Endothelial cell of umbilical vein (primary cell): ENCODE measurements at regions of chr1 and their contacts with region 1.

Region 1: DNA sequence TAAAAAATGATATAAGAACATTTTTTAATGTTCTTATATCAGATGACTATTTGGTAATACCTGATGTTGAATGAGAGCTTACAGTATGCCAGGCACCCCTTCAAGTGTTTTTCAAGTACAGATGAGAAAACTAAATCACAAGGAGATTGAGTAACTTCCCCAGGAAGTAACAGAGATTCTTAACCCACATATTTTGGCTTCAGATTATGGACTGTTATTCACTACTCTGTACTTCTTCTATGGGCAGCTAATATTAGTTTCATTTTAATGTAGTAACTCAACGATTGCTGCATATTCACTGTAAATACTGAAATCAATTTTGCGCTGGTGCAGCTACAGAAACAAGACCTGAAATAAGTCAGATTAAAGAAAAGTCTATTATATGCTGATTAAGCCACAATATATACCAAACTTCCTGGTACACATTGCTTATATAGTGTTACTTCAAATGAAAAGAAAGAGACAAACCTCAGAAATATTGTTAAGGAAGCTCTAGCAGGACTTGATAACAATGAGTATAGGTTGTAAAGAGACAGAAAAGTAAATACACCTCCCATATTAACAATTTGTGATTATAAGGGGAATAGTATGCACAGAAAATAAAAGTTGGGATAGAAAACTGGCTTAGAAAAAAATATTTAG is 19.7 kb downstream of the DPYD start:
- DNase-seq: peak; percentile 86
- H3K4me3 ChIP-seq: peak overlapping the region; percentile 21 to 88 (median 74)
- H3K27ac ChIP-seq: peak overlapping the region; percentile 92
- H3K4me1 ChIP-seq: peaks cover 44% of the 10 kb centered on the region
- H3K27me3 ChIP-seq: no peaks in the 10 kb centered on the region
- CTCF ChIP-seq: no peak
- POLR2A ChIP-seq: no peak

Region 2: DNA sequence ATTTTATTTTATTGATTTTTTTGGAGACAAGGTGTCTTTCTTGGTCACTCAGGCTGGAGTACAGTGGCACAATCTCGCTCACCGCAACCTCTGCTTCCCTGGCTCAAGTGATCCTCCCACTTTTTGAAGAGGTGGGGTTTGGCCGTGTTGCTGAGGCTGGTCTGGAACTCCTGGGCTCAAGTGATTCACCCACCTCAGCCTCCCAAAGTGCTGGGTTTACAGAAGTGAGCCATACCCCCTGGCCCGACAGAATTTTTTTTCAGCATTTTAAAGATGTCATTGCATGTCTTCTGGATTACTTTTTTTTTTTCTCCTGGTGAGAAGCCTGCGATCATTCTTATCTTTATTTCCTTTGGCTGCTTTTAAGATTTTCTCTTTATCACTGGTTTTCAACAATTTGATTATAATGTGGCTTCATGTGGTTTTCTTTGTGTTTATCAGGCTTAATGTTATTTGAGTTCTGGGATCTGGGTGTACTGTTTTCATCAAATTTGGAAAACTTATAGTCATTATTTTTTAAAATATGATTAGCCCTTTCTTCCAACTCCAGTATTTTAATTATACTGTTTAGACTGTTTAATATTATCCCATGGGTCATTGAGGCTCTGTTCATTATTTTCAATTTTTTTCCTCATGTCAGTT is 1202.7 kb before region 1 on chr1:
- CTCF ChIA-PET with region 1: no interaction called
- POLR2A ChIA-PET with region 1: no interaction called
- dilution Hi-C with region 1: no loop called
- intact Hi-C with region 1: no loop called
- DNase-seq: no peak
- H3K4me3 ChIP-seq: no peak overlapping the region
- H3K27ac ChIP-seq: no peak overlapping the region
- H3K4me1 ChIP-seq: no peaks in the 10 kb centered on the region
- H3K27me3 ChIP-seq: no peaks in the 10 kb centered on the region
- CTCF ChIP-seq: no peak
- POLR2A ChIP-seq: no peak

Region 3: GRCh38 chr1:97796711-97797110 is 104.4 kb before region 1 on chr1:
- CTCF ChIA-PET with region 1: no interaction called
- POLR2A ChIA-PET with region 1: no interaction called
- dilution Hi-C with region 1: no loop called
- intact Hi-C with region 1: loop called (anchors 1 kb)
- DNase-seq: peak; percentile 89
- H3K4me3 ChIP-seq: no peak overlapping the region
- H3K27ac ChIP-seq: peak overlapping the region; percentile 84
- H3K4me1 ChIP-seq: peaks cover 29% of the 10 kb centered on the region
- H3K27me3 ChIP-seq: no peaks in the 10 kb centered on the region
- CTCF ChIP-seq: no peak
- POLR2A ChIP-seq: no peak

Region 4: DNA sequence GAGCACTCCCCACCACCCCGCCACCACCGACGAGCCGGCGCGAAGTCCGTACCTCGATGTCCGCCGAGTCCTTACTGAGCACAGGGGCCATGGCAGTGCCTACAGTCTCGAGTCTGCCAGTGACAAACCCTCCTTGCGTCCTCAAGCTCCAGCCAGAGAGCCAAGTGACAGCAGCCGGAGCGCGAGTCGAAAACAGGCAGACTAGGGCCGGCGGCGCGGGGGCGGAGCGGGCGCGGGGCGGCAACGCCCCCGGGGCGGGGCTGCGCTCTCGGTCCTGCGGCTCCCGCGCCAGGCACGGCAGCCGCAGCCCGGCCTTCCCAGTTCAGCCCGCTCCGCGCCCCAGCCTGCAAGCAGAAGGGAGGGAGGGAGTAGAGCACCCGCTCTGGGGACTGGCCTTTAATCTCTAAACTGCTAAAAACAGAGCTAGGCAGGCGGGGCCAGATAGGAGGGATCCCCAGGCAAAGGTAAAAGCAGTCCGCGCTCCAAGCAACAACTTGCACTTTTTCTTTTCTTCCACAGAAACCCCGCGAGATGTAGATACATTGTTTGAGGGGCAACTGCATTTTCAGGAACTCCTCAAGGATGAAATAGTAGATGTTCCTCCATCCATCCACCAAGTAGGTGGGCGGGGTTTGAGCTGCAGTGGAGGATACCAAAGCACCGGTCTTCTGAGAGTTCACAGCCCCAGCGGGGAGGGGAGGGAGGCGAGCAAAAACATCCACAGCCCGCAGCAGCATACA is 19.9 kb after region 1 on chr1 and contains the start of gene DPYD:
- CTCF ChIA-PET with region 1: interaction called, 33 read pairs
- POLR2A ChIA-PET with region 1: interaction called, 8 read pairs
- dilution Hi-C with region 1: no loop called
- intact Hi-C with region 1: loop called (anchors 2 kb)
- DNase-seq: peak; percentile 87
- H3K4me3 ChIP-seq: peak within 1 kb of the TSS; percentile 94 to 97 (median 97)
- H3K27ac ChIP-seq: peak within 1 kb of the TSS; percentile 77
- H3K4me1 ChIP-seq: peaks cover 13% of the 10 kb centered on the region
- H3K27me3 ChIP-seq: no peaks in the 10 kb centered on the region
- CTCF ChIP-seq: no peak
- POLR2A ChIP-seq: peak; percentile 41
- total RNA-seq, gene DPYD: 15.1 and 17.9 TPM in 2 replicates